ENCODE measurements at regions of chr7 and their contacts with region 1.

Region 1: DNA sequence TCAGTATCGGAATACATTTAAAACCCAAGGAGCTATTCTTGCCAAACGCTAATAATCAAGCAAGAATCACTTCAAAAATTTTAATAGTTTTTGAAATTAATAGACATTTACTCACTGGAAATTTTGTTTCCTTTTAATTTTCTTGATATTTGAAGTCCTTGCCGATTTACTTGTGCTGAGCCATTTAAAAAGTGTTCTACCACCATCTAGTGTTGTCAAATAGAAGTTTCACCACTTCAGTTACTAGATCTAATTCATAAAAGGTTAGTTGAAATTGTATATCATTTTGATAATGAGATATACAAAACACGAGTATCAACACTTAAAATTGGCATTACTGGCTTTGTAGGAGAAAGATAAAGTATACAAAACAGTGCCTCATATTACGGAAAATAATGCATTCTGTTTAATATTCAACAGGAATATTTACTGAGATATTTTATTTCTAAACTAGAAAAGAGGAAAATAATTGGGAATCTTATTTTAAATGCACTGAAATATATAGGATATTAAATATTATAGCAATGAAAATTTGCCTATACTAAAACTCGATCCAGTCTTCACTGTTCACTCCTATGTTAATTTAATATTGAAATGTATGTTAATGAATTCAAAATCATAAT is 664.8 kb upstream of the SEMA3D start:
- DNase-seq: no peak
- ATAC-seq: no peak

Region 2: DNA sequence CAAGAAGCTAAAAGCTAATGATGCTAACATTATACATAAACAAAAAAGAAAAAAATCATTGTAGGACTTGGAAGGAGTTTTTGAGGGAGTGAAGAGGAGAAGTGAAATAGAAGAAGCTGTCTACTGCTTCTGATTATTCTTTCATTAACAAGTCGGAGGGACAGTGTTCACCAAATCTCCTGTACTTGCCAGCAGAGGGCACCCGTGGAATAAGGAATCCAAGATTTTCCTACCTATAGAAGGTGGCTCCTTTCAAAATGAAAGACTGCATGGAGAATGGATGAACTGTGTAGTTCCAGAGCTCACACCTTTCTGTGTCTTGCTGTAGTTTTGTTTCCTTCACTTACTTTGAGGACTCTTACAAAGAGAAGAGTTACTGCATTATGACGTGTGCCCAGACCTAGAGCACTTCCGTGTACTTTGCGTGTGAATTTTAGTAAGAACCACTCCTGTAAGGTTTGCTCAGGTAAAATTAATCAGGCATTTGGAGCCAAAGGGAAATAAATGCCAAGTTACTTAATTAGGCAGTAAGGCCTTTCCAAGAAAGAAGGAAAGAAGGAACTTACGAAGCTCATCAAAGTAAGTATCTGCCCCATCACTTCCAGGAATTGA is 810.0 kb before region 1 on chr7:
- intact Hi-C with region 1: loop called in 1 of 2 experiments (anchors 10 kb)
- DNase-seq: peak; percentile 39 to 70
- ATAC-seq: peak; percentile 72

Measured in left colon (tissue), 2 donors.